BJ (cell line): ENCODE measurements at regions of chr11 and their contacts with region 1.

Region 1: DNA sequence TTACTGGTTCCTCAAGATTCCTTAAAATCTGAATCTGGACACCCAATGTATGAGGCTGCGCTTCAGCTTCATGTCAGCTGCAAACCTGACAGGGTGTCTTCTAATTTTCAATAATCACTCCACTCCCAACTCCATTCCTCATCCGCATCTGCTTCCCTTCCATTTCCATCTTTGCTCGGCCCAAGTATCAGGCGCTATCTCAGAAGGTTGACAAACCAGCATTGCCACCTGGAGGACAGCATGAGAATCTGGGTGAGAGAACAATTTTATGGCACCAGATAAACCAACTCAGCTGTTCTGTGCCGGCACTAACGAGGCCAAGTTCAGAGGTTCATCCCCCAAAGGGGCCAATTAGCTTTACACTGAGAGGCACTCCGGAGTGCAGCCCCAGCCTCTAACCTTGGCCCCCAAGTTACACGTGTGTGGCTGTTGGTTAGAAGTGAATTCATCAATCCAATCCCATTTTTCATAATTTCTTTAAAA is 79.1 kb upstream of the LMO2 start:
- DNase-seq: no peak
- H3K4me3 ChIP-seq: no peak overlapping the region
- H3K27me3 ChIP-seq: peaks cover 4% of the 10 kb centered on the region; the same call in 1 of the 2 replicates
- CTCF ChIP-seq: peak; percentile 65

Region 2: GRCh38 chr11:33857933-33858371 is 113.1 kb before region 1 on chr11:
- CTCF ChIA-PET with region 1: interaction called, 81 read pairs
- POLR2A ChIA-PET with region 1: no interaction called
- DNase-seq: peak; percentile 1
- H3K4me3 ChIP-seq: no peak overlapping the region
- H3K27me3 ChIP-seq: peaks cover 21% of the 10 kb centered on the region
- CTCF ChIP-seq: peak; percentile 93

Region 3: DNA sequence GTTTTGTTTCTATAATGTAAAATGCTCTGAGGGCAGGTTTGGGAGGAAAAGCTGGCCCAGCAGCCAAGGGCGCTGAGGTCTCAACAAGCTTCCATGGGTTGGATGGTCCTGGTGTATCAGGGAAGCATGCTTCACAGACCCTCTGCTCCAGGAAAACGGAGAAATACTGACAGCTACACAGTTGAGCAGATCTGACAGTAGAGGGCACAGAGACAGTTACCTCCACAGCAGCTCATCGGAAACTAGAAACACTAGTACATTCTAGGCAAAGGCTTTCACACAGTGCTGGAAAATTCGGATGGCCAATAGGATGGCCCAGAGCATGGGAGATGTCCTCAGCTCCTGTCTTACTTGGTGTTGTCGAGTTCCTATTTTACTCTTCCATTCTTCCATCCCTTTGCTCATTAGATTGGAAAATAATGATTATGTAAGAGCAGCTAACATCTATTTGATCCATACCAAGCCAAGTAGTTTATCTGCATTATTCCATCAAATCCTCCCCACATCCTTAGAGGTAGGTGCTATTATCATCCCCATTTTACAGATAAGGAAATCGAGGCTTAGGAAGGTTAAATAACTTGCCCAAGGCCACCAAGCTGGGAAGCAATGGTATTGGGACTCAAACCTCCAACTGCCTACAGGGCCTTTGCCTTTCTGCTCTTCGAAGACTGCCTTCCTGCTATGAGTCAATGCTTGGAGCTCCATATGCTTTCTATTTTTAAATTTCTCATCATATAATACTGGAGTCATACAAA is 107.4 kb before region 1 on chr11:
- CTCF ChIA-PET with region 1: interaction called, 81 read pairs
- POLR2A ChIA-PET with region 1: no interaction called
- DNase-seq: no peak
- H3K4me3 ChIP-seq: no peak overlapping the region
- H3K27me3 ChIP-seq: peaks cover 40% of the 10 kb centered on the region
- CTCF ChIP-seq: no peak

Region 4: DNA sequence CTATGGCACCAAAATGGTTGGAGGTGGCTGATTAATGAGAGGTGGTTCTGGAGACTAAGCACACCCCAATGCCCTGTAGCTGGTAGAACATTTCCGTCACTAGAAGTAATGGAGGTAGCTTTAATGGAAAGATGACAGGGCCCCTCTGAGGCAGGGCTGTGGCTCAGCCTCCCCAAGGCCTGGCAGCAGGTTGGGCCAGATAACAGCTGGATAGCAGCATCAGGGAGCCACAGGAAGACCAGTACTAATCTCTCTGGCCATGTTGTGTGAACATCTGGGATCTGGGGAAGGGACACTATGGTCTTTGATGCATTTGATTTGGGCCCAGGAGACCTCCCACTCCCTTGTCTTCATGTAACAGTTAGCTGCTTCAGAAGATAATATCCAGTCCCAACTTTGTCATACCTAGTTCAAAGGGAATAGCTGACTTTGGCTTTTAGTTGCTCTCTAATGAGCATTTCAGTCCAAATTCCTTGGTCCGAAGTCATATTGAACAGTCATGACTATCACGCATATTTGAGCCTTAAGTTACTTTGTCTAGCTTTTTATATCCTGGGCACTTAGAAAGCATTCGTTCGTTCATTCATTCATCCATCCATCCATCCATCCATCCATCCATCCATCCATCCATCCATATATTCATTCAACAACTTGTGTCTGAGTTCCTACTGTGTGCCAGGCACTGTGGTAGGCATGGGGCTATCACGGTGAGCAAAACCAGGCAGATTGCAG is 26.2 kb before region 1 on chr11:
- CTCF ChIA-PET with region 1: interaction called, 11 read pairs
- POLR2A ChIA-PET with region 1: no interaction called
- DNase-seq: no peak
- H3K4me3 ChIP-seq: no peak overlapping the region
- H3K27me3 ChIP-seq: peaks cover 5% of the 10 kb centered on the region; the same call in 1 of the 2 replicates
- CTCF ChIP-seq: no peak

Region 5: DNA sequence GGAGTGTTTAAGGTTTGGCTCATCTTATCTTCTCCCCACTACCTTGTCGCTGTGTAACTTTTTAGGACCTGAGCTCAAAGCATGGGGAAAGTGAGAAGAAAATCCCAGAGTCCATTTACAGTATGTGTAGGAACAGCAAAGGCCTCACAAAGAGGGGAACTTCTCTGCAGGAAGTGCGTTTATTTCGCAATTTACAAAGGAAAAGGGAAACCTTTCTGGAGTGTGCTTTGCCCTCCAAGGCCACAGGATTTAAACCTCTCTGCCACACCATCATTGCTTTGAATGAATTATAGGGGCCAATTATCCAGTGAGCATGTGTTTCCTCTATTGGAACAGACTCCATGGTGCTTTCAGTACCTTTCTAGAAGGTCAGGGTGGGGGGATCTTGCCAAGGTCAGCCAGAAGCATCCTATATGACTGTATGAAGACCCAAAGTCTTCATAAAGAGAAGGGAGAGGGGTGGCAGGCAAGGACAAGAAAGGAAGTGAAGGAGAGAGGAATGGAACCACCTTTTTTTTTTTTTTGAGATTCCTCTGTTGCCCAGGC is 11.1 kb before region 1 on chr11:
- CTCF ChIA-PET with region 1: interaction called, 16 read pairs
- POLR2A ChIA-PET with region 1: no interaction called
- DNase-seq: no peak
- H3K4me3 ChIP-seq: no peak overlapping the region
- H3K27me3 ChIP-seq: peaks cover 4% of the 10 kb centered on the region
- CTCF ChIP-seq: no peak